SK-N-SH (cell line): ENCODE measurements at regions of chr9 and their contacts with region 1.

Region 1: DNA sequence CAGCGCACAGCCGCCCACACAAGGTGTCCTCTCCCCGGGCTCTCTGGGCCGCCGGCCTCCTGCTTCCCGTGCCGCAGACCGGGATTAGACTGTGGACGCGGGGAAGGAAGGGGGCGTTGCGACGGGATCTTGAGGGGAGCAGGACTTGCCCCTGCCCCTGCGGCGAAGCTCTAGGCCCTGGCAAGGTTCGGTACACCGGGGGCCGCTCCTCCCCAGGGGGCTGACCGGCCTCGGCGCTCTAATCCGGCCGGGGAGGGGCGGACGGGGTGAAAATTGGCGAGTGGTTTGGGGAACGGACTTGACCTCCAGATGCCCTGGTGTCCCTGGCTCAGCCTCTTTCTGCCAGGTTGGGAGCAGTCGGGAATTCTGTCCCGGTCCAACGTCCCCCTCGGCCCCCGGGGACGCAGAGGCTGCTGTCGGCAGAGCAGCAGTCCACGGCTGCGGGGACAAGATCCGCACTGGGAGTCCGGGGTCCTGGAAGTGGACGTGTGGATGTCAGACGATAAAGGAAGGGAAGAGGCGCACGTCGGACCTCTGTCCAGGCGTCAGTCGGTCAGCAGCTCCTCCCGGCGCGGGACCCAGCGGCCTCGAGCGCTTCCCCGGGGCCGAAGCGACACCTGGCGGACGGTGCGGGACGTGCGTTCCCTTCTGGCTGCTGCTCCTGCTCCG is 1.9 kb upstream of the CNTFR start:
- DNase-seq: peak; percentile 95
- H3K4me3 ChIP-seq: peak overlapping the region in 1 of 2 experiments; percentile 46; a peak in 1 of 4 replicates
- H3K27ac ChIP-seq: no peak overlapping the region
- H3K4me1 ChIP-seq: peaks cover 0 to 29% of the 10 kb centered on the region in 2 experiments; a peak in 1 of 4 replicates
- H3K27me3 ChIP-seq: peaks cover 43% of the 10 kb centered on the region
- CTCF ChIP-seq: peak; percentile 75
- EP300 ChIP-seq: no peak
- RAD21 ChIP-seq: peak; percentile 95

Region 2: DNA sequence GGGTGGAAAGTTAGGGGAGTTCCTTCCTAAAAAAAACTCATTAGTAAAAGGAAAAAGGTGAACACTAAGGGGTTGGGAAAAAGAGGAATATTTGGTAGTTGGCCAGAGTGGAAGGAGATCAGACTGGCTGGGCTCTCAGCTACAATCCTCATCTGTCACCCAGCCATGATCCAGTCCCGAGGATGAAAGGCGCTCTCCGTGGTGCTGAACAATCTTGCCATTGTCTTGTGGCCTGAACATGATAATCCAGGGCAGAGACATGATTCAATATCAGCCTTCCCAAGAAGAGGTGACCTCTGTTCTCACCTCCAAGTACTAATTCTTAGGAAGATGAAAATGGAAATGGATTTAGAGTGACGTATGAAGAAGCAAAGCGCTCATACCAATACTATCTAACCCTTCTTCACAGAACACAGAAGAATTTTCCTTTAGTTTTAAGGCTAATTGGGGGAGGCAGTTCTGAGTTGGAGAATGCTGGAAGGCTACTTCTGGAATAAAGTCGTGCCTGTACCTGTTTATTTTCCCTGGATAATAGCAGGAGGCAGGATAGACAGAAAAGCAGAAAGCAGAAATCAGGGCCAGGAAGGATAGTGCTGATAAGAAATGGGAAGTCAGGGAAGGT is 178.0 kb before region 1 on chr9:
- CTCF ChIA-PET with region 1: interaction called, 23 read pairs
- POLR2A ChIA-PET with region 1: no interaction called
- DNase-seq: no peak
- H3K4me3 ChIP-seq: no peak overlapping the region
- H3K27ac ChIP-seq: no peak overlapping the region
- H3K4me1 ChIP-seq: peaks cover 0 to 12% of the 10 kb centered on the region in 2 experiments; a peak in 1 of 4 replicates
- H3K27me3 ChIP-seq: no peaks in the 10 kb centered on the region
- CTCF ChIP-seq: no peak
- EP300 ChIP-seq: no peak
- RAD21 ChIP-seq: no peak

Region 3: GRCh38 chr9:34493972-34494535 is 97.3 kb before region 1 on chr9:
- CTCF ChIA-PET with region 1: interaction called, 13 read pairs
- POLR2A ChIA-PET with region 1: no interaction called
- DNase-seq: no peak
- H3K4me3 ChIP-seq: no peak overlapping the region
- H3K27ac ChIP-seq: no peak overlapping the region
- H3K4me1 ChIP-seq: peaks cover 0 to 6% of the 10 kb centered on the region in 2 experiments; a peak in 1 of 4 replicates
- H3K27me3 ChIP-seq: no peaks in the 10 kb centered on the region; the same call in 1 of the 2 replicates
- CTCF ChIP-seq: no peak
- EP300 ChIP-seq: no peak
- RAD21 ChIP-seq: no peak

Region 4: GRCh38 chr9:34540828-34541227 is 50.6 kb before region 1 on chr9:
- CTCF ChIA-PET with region 1: interaction called, 507 read pairs
- POLR2A ChIA-PET with region 1: no interaction called
- DNase-seq: peak; percentile 10
- H3K4me3 ChIP-seq: no peak overlapping the region
- H3K27ac ChIP-seq: no peak overlapping the region; a peak in 1 of 4 replicates
- H3K4me1 ChIP-seq: peaks cover 0 to 6% of the 10 kb centered on the region in 2 experiments; a peak in 1 of 4 replicates
- H3K27me3 ChIP-seq: peaks cover 6% of the 10 kb centered on the region; the same call in 1 of the 2 replicates
- CTCF ChIP-seq: no peak
- EP300 ChIP-seq: no peak
- RAD21 ChIP-seq: no peak

Region 5: DNA sequence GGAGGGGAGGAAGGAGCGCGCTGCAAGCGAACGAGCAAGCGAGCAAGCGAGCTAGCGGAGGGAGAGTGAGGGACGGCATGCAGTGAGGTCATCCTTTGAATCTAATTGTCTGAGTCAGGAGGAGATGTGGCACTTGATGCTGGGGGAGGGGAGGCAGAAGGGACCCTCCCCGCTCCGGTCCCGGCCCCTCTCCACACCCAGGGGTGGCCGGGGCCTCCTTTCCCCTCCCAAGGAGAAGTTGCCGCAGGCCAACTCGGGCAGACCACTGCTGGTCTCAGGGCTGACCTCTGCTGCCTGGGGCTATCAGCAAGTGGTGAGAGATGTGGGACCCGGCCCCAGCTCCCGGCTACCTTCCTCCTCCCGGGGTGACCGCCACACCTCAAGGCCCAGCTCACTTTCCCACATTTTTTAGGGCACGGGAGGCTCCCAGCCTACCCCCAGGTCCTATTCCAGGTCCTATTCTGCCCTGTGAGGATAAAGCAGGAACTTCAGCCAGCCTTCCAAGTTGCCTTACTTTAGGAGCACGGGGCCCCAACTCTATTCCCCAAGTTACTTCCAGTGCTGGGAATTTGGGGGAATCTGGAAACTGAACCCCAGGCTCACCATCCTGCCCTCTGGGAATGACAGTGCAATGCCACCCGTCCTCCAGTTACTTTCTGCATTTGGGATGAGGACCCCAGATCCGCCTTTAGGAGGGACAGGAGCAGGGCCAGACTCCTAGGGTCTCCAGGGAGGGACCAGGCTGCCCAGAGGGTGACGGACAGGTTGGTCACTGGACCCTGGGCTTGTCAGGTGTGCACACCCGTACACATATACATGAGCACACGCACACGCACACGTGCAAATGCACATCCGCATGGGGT is 12.9 kb before region 1 on chr9:
- CTCF ChIA-PET with region 1: interaction called, 112 read pairs
- POLR2A ChIA-PET with region 1: interaction called, 10 read pairs
- DNase-seq: peak; percentile 85
- H3K4me3 ChIP-seq: peak overlapping the region; percentile 26 to 35; a peak in 3 of 4 replicates
- H3K27ac ChIP-seq: peak overlapping the region in 1 of 2 experiments; percentile 75; a peak in 2 of 4 replicates
- H3K4me1 ChIP-seq: peaks cover 0 to 86% of the 10 kb centered on the region in 2 experiments; a peak in 2 of 4 replicates
- H3K27me3 ChIP-seq: peaks cover 33% of the 10 kb centered on the region
- CTCF ChIP-seq: no peak
- EP300 ChIP-seq: no peak
- RAD21 ChIP-seq: no peak

Region 6: GRCh38 chr9:34628656-34629491 is 37.5 kb after region 1 on chr9 and contains the start of gene ARID3C:
- CTCF ChIA-PET with region 1: interaction called, 12 read pairs
- POLR2A ChIA-PET with region 1: no interaction called
- DNase-seq: peak; percentile 84
- H3K4me3 ChIP-seq: peak within 1 kb of the TSS; percentile 44 to 52
- H3K27ac ChIP-seq: no peak within 1 kb of the TSS
- H3K4me1 ChIP-seq: peaks cover 0 to 8% of the 10 kb centered on the region in 2 experiments; a peak in 1 of 4 replicates
- H3K27me3 ChIP-seq: peaks cover 21% of the 10 kb centered on the region; the same call in 1 of the 2 replicates
- CTCF ChIP-seq: no peak
- EP300 ChIP-seq: no peak
- RAD21 ChIP-seq: no peak
- polyA plus RNA-seq, gene ARID3C: 0.08 and 0.11 TPM in 2 replicates

Region 7: GRCh38 chr9:34675048-34675714 is 83.8 kb after region 1 on chr9:
- CTCF ChIA-PET with region 1: no interaction called
- POLR2A ChIA-PET with region 1: no interaction called
- DNase-seq: peak; percentile 84
- H3K4me3 ChIP-seq: peak overlapping the region in 1 of 2 experiments; percentile 11; a peak in 1 of 4 replicates
- H3K27ac ChIP-seq: no peak overlapping the region
- H3K4me1 ChIP-seq: no peaks in the 10 kb centered on the region
- H3K27me3 ChIP-seq: no peaks in the 10 kb centered on the region
- CTCF ChIP-seq: peak; percentile 70
- EP300 ChIP-seq: no peak
- RAD21 ChIP-seq: peak; percentile 83

Region 8: GRCh38 chr9:34737677-34738260 is 146.4 kb after region 1 on chr9:
- CTCF ChIA-PET with region 1: no interaction called
- POLR2A ChIA-PET with region 1: no interaction called
- DNase-seq: peak; percentile 55
- H3K4me3 ChIP-seq: no peak overlapping the region
- H3K27ac ChIP-seq: no peak overlapping the region
- H3K4me1 ChIP-seq: peaks cover 0 to 3% of the 10 kb centered on the region in 2 experiments; a peak in 1 of 4 replicates
- H3K27me3 ChIP-seq: no peaks in the 10 kb centered on the region
- CTCF ChIP-seq: no peak
- EP300 ChIP-seq: peak in 1 of 2 experiments; percentile 65; a peak in 1 of 4 replicates
- RAD21 ChIP-seq: no peak

Region 9: GRCh38 chr9:34989003-34989945 is 397.9 kb after region 1 on chr9 and contains the start of gene DNAJB5:
- CTCF ChIA-PET with region 1: no interaction called
- POLR2A ChIA-PET with region 1: no interaction called
- DNase-seq: peak; percentile 96
- H3K4me3 ChIP-seq: peak within 1 kb of the TSS; percentile 70 to 94
- H3K27ac ChIP-seq: peak within 1 kb of the TSS; percentile 55 to 95
- H3K4me1 ChIP-seq: peaks cover 28 to 76% of the 10 kb centered on the region in 2 experiments
- H3K27me3 ChIP-seq: no peaks in the 10 kb centered on the region
- CTCF ChIP-seq: no peak
- EP300 ChIP-seq: peak in 1 of 2 experiments; percentile 21; a peak in 1 of 4 replicates
- RAD21 ChIP-seq: no peak
- polyA plus RNA-seq, gene DNAJB5: 3.3 and 4.0 TPM in 2 replicates